ENCODE measurements at regions of chr19 and their contacts with region 1.

Region 1: DNA sequence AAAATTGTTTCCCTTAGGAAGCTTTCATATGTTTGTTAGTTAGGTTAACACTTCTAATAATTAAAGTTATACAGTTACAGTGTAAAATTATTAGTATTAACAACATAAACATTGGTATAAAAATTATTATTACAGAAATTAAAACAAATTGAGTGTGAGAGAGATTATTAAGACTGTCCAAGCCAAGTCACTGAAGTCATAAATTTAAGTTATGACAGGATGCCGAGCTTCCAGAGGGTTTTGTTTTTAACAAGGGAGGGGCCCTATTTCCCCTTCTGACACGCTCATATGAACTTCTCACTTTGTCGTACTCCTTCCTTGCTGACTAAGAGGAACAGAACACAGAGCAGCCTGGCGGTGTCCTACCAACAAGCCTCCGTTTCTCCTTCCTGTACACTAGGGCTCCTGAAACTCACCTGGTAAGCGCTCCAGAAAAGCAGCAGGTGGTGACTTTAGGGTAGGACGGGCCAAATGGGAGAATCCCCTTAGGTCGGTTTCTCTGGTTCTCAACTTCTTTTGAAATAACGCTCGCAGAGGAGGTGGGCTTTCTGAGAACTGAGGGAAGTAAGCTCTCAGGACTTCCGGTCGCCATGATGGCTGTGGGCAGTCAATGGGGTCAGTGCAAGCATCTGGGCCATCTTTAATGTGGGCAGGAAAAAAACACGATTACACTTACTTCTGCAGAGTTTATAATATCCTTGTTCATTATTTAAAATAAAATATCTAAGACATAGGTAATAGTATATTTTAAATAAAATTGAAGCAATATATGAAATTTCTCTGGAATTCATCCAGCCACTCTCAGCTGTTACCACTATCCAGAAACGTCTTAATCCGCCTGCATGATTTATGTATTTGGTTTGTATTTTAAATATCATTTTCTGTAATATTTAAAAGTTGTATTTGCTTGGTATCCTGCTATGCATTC is at the start of gene CARD8:
- DNase-seq: peak; percentile 90
- H3K4me3 Mint-ChIP-seq: peak within 1 kb of the TSS; percentile 97
- H3K27ac Mint-ChIP-seq: peak within 1 kb of the TSS; percentile 99
- H3K4me1 Mint-ChIP-seq: peaks cover 9% of the 10 kb centered on the region
- H3K27me3 Mint-ChIP-seq: no peaks in the 10 kb centered on the region
- CTCF ChIP-seq: no peak
- total RNA-seq, gene CARD8: 16.0 and 24.0 TPM in 2 replicates

Region 2: DNA sequence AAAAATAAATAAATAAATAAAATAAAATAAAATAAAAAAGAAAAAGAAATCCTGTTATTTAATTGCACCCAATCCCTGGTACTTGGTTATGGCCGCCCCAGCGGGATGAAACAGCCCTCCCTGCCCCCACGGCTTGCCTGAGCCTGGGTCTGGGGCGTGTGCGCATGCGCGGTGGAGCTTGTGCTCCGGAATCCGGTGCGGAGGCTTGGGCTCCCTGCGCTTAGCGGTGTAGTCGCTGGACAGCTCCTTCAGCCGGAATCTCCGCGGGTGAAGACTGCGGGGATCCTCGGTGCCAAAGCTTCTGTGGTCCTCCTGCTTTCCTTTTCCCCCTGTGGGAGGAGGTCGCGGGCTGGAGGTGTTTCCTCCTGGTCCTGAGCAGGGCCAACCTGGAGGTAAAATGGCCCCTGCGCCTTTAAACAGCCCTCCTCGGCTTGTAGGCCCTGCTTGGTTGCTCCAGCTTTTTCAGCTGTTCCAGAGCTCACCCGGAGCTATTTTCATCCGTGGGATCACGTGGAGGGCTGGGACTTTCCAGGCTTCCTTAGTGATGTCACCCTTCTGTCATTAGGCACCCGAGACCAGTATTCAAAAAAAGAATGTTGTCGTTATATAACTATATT is 145.2 kb before region 1 on chr19 and contains the start of gene PLA2G4C:
- CTCF ChIA-PET with region 1: interaction called, 3 read pairs
- POLR2A ChIA-PET with region 1: no interaction called
- intact Hi-C with region 1: loop called (anchors 1 kb)
- DNase-seq: peak; percentile 87
- H3K4me3 Mint-ChIP-seq: peak within 1 kb of the TSS; percentile 69
- H3K27ac Mint-ChIP-seq: peak within 1 kb of the TSS; percentile 71
- H3K4me1 Mint-ChIP-seq: no peaks in the 10 kb centered on the region
- H3K27me3 Mint-ChIP-seq: peaks cover 14% of the 10 kb centered on the region
- CTCF ChIP-seq: no peak
- total RNA-seq, gene PLA2G4C: 1.1 and 1.4 TPM in 2 replicates

Region 3: GRCh38 chr19:48137411-48137810 is 118.2 kb before region 1 on chr19:
- CTCF ChIA-PET with region 1: no interaction called
- POLR2A ChIA-PET with region 1: no interaction called
- intact Hi-C with region 1: no loop called
- DNase-seq: no peak
- H3K4me3 Mint-ChIP-seq: no peak overlapping the region
- H3K27ac Mint-ChIP-seq: no peak overlapping the region
- H3K4me1 Mint-ChIP-seq: no peaks in the 10 kb centered on the region
- H3K27me3 Mint-ChIP-seq: no peaks in the 10 kb centered on the region
- CTCF ChIP-seq: no peak

Region 4: DNA sequence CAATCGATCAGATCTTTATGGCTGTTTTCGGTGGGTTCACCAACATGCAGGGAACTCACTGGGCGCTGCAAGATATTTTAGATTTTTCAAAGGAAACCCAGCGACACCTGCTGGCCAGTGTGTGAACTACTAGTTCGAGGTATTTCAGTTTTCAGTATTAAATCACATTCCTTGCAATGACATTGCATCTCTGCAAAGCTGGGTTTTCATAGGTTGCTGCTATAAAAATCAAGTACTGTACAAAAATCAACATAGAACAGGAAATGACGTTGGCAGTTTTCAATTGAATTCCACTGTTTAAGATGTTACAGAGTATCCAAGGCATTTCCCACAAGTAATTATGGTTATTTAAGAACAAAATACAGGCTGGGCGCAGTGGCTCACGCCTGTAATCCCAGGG is 103.1 kb before region 1 on chr19:
- CTCF ChIA-PET with region 1: interaction called, 5 read pairs
- POLR2A ChIA-PET with region 1: interaction called, 4 read pairs
- intact Hi-C with region 1: loop called (anchors 1 kb)
- DNase-seq: peak; percentile 62
- H3K4me3 Mint-ChIP-seq: no peak overlapping the region
- H3K27ac Mint-ChIP-seq: no peak overlapping the region
- H3K4me1 Mint-ChIP-seq: no peaks in the 10 kb centered on the region
- H3K27me3 Mint-ChIP-seq: no peaks in the 10 kb centered on the region
- CTCF ChIP-seq: peak; percentile 65

Region 5: DNA sequence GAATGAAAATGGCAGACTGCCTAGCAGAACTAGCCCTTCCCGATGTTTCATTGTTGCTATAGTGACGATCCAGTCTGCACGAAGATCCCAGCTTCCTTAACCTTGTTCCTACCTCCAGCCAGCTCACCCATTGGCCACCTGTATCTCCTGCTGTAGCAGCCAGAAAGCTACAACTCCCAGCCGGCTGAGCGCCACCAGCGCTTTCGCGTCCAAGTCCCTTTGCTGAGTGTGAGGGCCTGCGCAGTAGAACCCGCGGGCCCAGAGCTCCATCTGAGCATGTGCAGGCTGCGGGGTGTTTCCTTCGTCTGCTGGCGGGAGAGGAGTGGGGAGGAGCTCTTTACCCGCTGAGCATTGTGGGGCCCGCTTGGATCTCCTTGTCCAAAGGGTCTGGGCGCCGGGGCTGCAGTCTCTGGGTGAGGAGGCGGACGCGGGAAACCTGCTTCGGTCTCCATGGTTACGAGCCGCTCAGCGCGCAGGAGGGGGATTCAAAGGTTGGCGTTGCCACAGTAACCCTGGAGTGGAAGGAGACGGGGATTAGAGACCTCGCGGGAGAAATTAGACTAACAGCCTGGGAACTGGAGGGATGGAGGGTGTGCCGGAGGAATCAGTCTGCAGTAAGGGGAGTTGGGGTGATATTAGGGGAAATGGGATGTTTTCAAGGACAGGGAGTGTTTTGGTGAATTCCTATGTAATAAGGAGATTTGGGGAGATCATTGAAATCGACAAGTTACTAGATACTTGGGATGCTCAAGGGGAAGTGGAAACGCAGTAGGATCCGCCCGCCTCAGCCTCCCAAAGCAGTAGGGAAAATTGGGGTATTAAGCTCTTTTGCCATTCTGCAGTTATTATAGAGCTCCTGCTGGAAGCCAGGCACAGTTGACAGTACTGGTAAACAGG is 51.7 kb before region 1 on chr19:
- CTCF ChIA-PET with region 1: interaction called, 14 read pairs
- POLR2A ChIA-PET with region 1: interaction called, 18 read pairs
- intact Hi-C with region 1: no loop called
- DNase-seq: peak; percentile 97
- H3K4me3 Mint-ChIP-seq: no peak overlapping the region
- H3K27ac Mint-ChIP-seq: no peak overlapping the region
- H3K4me1 Mint-ChIP-seq: no peaks in the 10 kb centered on the region
- H3K27me3 Mint-ChIP-seq: no peaks in the 10 kb centered on the region
- CTCF ChIP-seq: no peak

Region 6: DNA sequence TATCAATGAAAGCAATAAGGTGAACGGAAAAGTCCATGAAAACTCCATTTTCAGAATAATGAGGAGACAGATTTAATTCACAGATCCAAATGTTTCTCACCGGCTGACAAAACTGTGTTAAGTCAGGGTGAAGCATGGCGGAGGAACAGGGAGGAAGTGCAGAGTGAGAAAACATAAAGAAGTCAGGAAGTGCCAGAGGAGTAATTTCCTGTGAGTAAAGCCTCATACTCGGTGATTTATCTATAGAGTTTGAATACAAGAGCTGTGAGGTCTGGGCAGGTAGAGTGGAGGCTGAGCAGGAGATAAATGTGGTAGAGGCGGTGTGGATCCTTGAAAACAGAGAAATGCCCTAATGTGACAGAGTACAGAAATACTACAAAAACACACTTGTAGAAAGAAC is 11.4 kb before region 1 on chr19:
- CTCF ChIA-PET with region 1: interaction called, 3 read pairs
- POLR2A ChIA-PET with region 1: interaction called, 10 read pairs
- intact Hi-C with region 1: no loop called
- DNase-seq: no peak
- H3K4me3 Mint-ChIP-seq: no peak overlapping the region
- H3K27ac Mint-ChIP-seq: no peak overlapping the region
- H3K4me1 Mint-ChIP-seq: peaks cover 14% of the 10 kb centered on the region
- H3K27me3 Mint-ChIP-seq: no peaks in the 10 kb centered on the region
- CTCF ChIP-seq: no peak

Region 7: GRCh38 chr19:48284896-48285295 is 29.3 kb after region 1 on chr19:
- CTCF ChIA-PET with region 1: no interaction called
- POLR2A ChIA-PET with region 1: no interaction called
- intact Hi-C with region 1: no loop called
- DNase-seq: no peak
- H3K4me3 Mint-ChIP-seq: no peak overlapping the region
- H3K27ac Mint-ChIP-seq: no peak overlapping the region
- H3K4me1 Mint-ChIP-seq: no peaks in the 10 kb centered on the region
- H3K27me3 Mint-ChIP-seq: no peaks in the 10 kb centered on the region
- CTCF ChIP-seq: no peak